Left lung (tissue), 14 donors: ENCODE measurements at regions of chrX and their contacts with region 1.

Region 1: GRCh38 chrX:19887911-19888879 is 795 bp upstream of the SH3KBP1 start:
- DNase-seq: peak; percentile 55 to 85 (median 66)
- ATAC-seq: peak; percentile 82
- H3K4me3 ChIP-seq: peak overlapping the region; percentile 33 to 60
- H3K27ac ChIP-seq: peak overlapping the region; percentile 75 to 78
- H3K4me1 ChIP-seq: peaks cover 0 to 26% of the 10 kb centered on the region in 2 donors
- H3K27me3 ChIP-seq: no peaks in the 10 kb centered on the region
- CTCF ChIP-seq: peak; percentile 30 to 41

Region 2: GRCh38 chrX:19593690-19594089 is 294.5 kb before region 1 on chrX:
- intact Hi-C with region 1: loop called in 1 of 2 experiments (anchors 10 kb)
- DNase-seq: peak in 2 of 4 donors; percentile 43 to 59
- ATAC-seq: peak; percentile 68
- H3K4me3 ChIP-seq: no peak overlapping the region
- H3K27ac ChIP-seq: no peak overlapping the region
- H3K4me1 ChIP-seq: no peaks in the 10 kb centered on the region
- H3K27me3 ChIP-seq: no peaks in the 10 kb centered on the region
- CTCF ChIP-seq: peak in 1 of 2 donors; percentile 34

Region 3: DNA sequence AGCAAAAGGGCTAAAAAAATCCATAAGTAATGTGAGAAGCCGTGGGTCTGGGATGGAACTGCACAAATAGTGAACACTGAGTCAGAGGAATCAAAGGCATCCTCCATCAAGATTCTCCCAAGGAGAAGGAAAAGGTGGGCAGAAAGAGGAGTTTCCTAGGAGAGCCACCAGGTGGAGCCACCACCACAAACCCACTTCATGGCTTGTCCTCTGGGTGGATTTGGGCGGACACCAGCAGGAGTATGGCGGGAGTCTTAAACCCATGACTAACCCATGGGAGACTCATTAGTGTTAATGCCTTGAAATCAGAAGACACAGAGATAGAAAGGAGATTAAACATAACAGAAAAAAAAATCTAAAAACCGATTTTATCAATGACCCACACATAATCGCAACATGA is 148.5 kb before region 1 on chrX:
- intact Hi-C with region 1: loop called in 1 of 2 experiments (anchors 10 kb)
- DNase-seq: no peak
- ATAC-seq: peak; percentile 79
- H3K4me3 ChIP-seq: no peak overlapping the region
- H3K27ac ChIP-seq: no peak overlapping the region
- H3K4me1 ChIP-seq: peaks cover 0 to 5% of the 10 kb centered on the region in 2 donors
- H3K27me3 ChIP-seq: no peaks in the 10 kb centered on the region
- CTCF ChIP-seq: peak; percentile 48 to 62